CD4-positive, alpha-beta memory T cell (primary cell): ENCODE measurements at regions of chr18 and their contacts with region 1.

Region 1: DNA sequence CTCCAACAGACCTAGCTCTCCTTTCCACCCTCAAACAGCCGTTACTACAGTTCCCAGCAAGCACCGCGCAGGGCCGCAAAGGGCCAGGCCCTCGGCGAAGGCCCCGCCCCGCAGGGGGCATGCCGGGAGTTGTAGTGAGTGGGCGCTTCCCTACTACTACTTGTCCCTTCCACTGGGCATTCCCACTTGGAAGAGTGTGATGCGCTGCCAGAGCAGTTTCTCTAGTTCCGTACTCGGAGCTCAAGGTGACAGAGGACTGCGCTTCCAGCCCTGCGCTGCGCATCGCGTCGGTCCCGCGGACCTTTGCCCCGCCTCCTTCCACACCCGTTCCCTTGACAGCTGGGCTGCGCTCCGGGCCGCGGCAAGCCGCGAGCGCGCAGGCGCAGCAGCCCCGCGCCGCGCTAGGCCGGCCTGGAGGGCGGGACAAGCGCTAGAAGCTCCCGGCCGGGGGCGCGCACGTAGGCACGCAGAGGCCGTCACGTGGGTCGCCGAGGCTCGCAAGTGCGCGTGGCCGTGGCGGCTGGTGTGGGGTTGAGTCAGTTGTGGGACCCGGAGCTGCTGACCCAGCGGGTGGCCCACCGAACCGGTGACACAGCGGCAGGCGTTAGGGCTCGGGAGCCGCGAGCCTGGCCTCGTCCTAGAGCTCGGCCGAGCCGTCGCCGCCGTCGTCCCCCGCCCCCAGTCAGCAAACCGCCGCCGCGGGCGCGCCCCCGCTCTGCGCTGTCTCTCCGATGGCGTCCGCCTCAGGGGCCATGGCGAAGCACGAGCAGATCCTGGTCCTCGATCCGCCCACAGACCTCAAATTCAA is at the start of gene VAPA:
- DNase-seq: peak; percentile 94 to 98 (median 97)
- H3K4me3 ChIP-seq: peak within 1 kb of the TSS; percentile 79 to 80
- H3K4me3 Mint-ChIP-seq: peak within 1 kb of the TSS; percentile 92 to 95 (median 95)
- H3K27ac ChIP-seq: peak within 1 kb of the TSS; percentile 97
- H3K27ac Mint-ChIP-seq: peak within 1 kb of the TSS; percentile 92 to 99 (median 97)
- H3K4me1 ChIP-seq: peaks cover 42% of the 10 kb centered on the region
- H3K4me1 Mint-ChIP-seq: peaks cover 19 to 32% (median 25%) of the 10 kb centered on the region in 4 donors
- H3K27me3 ChIP-seq: no peaks in the 10 kb centered on the region
- H3K27me3 Mint-ChIP-seq: peaks cover 6 to 7% of the 10 kb centered on the region in 2 donors
- total RNA-seq, gene VAPA: 113 to 116 TPM

Region 2: GRCh38 chr18:8608795-8609658 is 1304.7 kb before region 1 on chr18 and contains the start of gene RAB12:
- CTCF ChIA-PET with region 1: no interaction called
- POLR2A ChIA-PET with region 1: no interaction called
- intact Hi-C with region 1: loop called (anchors 2 kb)
- DNase-seq: peak; percentile 84 to 87 (median 85)
- H3K4me3 ChIP-seq: peak within 1 kb of the TSS; percentile 83 to 89
- H3K4me3 Mint-ChIP-seq: peak within 1 kb of the TSS; percentile 90 to 96 (median 92)
- H3K27ac ChIP-seq: peak within 1 kb of the TSS; percentile 71
- H3K27ac Mint-ChIP-seq: peak within 1 kb of the TSS; percentile 84 to 96 (median 93)
- H3K4me1 ChIP-seq: peaks cover 45% of the 10 kb centered on the region
- H3K4me1 Mint-ChIP-seq: peaks cover 33 to 54% (median 44%) of the 10 kb centered on the region in 4 donors
- H3K27me3 ChIP-seq: peaks cover 1% of the 10 kb centered on the region
- H3K27me3 Mint-ChIP-seq: peaks cover 3 to 4% of the 10 kb centered on the region in 2 donors
- total RNA-seq, gene RAB12: 20.7 to 20.8 TPM

Region 3: GRCh38 chr18:9102508-9103375 is 811.0 kb before region 1 on chr18 and contains the start of gene NDUFV2:
- CTCF ChIA-PET with region 1: no interaction called
- POLR2A ChIA-PET with region 1: no interaction called
- intact Hi-C with region 1: loop called (anchors 2 kb)
- DNase-seq: peak; percentile 95 to 97 (median 97)
- H3K4me3 ChIP-seq: peak within 1 kb of the TSS; percentile 81 to 92
- H3K4me3 Mint-ChIP-seq: peak within 1 kb of the TSS; percentile 89 to 96 (median 94)
- H3K27ac ChIP-seq: peak within 1 kb of the TSS; percentile 82
- H3K27ac Mint-ChIP-seq: peak within 1 kb of the TSS; percentile 94 to 99 (median 97)
- H3K4me1 ChIP-seq: peaks cover 55% of the 10 kb centered on the region
- H3K4me1 Mint-ChIP-seq: peaks cover 37 to 65% (median 52%) of the 10 kb centered on the region in 4 donors
- H3K27me3 ChIP-seq: no peaks in the 10 kb centered on the region
- H3K27me3 Mint-ChIP-seq: no peaks in the 10 kb centered on the region
- total RNA-seq, gene NDUFV2: 135 TPM

Region 4: DNA sequence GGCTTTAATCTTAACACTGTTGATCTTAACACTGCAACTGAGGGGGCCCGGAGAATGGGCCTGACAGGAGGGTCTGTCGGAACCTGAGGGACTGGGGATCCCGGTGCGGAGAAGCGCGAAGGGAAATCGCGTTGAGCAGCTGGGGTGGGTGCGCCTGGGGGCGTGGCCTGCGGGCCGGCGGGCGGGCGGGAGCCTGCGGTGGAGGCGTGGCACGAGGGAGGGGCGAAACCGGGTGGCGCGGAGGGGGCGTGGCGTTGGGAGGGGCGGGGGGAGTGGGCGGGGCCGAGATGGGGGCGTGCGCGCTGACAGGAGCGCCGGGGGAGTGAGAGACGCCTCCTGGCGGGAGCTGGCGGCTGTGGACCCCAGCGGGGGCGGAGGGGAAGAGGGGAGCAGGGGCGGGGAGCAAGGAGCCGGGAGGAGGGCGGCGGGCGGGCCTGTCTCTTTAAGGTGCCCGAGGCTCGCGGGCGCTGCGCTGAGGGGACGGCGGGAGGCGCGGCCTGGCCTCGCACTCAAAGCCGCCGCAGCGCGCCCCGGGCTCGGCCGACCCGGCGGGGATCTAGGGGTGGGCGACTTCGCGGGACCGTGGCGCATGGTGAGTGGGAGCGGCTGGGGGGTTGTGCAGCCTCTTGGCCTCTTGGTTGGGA is 579.3 kb before region 1 on chr18 and contains the start of gene TWSG1:
- CTCF ChIA-PET with region 1: no interaction called
- POLR2A ChIA-PET with region 1: no interaction called
- intact Hi-C with region 1: loop called (anchors 2 kb)
- DNase-seq: peak; percentile 90 to 94 (median 91)
- H3K4me3 ChIP-seq: peak within 1 kb of the TSS; percentile 76 to 90
- H3K4me3 Mint-ChIP-seq: peak within 1 kb of the TSS; percentile 85 to 96 (median 90)
- H3K27ac ChIP-seq: peak within 1 kb of the TSS; percentile 57
- H3K27ac Mint-ChIP-seq: peak within 1 kb of the TSS; percentile 83 to 93 (median 91)
- H3K4me1 ChIP-seq: peaks cover 17% of the 10 kb centered on the region
- H3K4me1 Mint-ChIP-seq: peaks cover 8 to 27% (median 18%) of the 10 kb centered on the region in 4 donors
- H3K27me3 ChIP-seq: no peaks in the 10 kb centered on the region
- H3K27me3 Mint-ChIP-seq: peaks cover 1 to 6% of the 10 kb centered on the region in 2 donors
- total RNA-seq, gene TWSG1: 5.1 to 6.0 TPM

Region 5: DNA sequence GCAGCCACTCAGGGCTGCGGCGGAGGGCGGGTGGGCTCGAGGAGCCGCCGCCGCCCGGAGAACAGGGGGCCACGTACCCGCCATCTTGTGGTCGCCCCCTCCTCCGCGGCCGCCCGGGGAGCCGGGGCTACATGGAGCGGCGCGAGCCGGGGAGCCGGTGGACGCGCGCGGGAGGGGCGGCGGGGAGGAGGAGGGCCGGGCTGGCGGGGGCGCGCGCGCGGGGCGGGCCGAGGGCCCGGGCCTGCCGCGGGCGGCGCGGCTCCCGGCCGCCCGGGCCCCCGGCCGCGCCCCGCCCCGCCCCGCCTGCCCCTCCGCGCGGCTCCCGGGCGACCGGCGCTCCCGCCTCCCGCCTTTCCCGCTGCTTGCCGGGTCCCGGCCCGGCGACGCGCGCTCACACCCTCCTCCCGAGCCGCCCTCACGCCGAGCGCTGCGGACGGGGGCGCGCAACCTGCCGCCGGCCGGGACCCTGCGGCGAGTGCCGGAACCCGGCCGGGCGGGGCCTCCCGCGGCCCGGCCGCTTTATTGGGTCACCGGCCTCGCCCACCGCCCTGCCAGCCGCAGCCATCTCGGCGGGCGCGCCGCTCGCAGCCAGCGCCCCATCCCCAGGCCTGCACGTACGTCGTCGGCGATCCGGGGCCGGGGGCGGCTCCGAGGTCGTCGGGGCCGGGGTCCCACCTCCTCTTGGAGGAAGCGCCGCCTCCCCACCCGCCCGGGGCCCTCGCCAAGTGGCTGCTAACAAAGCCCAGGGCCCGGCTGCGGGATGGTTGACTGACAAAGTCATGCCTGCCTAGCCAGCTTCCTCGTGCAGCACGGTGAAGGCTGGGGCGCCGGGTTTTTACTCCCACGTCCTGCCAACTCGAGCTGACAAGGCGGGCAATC is 299.1 kb before region 1 on chr18 and contains the start of gene PPP4R1:
- CTCF ChIA-PET with region 1: interaction called, 4 read pairs
- POLR2A ChIA-PET with region 1: interaction called, 11 read pairs
- intact Hi-C with region 1: loop called (anchors 1 kb)
- DNase-seq: peak; percentile 58 to 78 (median 64)
- H3K4me3 ChIP-seq: peak within 1 kb of the TSS; percentile 66 to 90
- H3K4me3 Mint-ChIP-seq: peak within 1 kb of the TSS; percentile 93 to 99 (median 96)
- H3K27ac ChIP-seq: peak within 1 kb of the TSS; percentile 64
- H3K27ac Mint-ChIP-seq: peak within 1 kb of the TSS; percentile 93 to 96 (median 95)
- H3K4me1 ChIP-seq: peaks cover 40% of the 10 kb centered on the region
- H3K4me1 Mint-ChIP-seq: peaks cover 29 to 54% (median 37%) of the 10 kb centered on the region in 4 donors
- H3K27me3 ChIP-seq: no peaks in the 10 kb centered on the region
- H3K27me3 Mint-ChIP-seq: no peaks in the 10 kb centered on the region
- total RNA-seq, gene PPP4R1: 64.0 to 71.0 TPM

Region 6: DNA sequence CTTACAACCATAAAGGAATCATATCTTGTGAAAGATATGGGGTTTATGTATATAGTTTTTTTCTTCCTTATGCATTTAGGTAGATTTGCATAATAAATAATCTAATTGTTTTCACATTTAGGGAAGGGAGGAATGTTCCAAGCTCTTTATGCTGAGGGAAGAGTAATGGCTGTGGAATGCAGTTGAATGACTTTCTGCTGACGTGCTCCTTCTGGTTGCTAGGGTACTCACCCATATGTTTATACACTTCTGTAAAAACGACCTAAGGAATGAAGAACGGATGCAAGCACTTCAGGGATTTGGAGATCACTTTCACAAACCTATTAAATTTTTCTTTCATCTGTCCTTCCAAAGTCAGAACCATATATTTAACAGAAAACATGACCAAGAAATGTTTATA is 270.2 kb before region 1 on chr18:
- CTCF ChIA-PET with region 1: no interaction called
- POLR2A ChIA-PET with region 1: no interaction called
- intact Hi-C with region 1: no loop called
- DNase-seq: no peak
- H3K4me3 ChIP-seq: no peak overlapping the region
- H3K4me3 Mint-ChIP-seq: no peak overlapping the region
- H3K27ac ChIP-seq: no peak overlapping the region
- H3K27ac Mint-ChIP-seq: no peak overlapping the region
- H3K4me1 ChIP-seq: no peaks in the 10 kb centered on the region
- H3K4me1 Mint-ChIP-seq: no peaks in the 10 kb centered on the region
- H3K27me3 ChIP-seq: no peaks in the 10 kb centered on the region
- H3K27me3 Mint-ChIP-seq: peaks cover 3 to 4% of the 10 kb centered on the region in 2 donors

Region 7: DNA sequence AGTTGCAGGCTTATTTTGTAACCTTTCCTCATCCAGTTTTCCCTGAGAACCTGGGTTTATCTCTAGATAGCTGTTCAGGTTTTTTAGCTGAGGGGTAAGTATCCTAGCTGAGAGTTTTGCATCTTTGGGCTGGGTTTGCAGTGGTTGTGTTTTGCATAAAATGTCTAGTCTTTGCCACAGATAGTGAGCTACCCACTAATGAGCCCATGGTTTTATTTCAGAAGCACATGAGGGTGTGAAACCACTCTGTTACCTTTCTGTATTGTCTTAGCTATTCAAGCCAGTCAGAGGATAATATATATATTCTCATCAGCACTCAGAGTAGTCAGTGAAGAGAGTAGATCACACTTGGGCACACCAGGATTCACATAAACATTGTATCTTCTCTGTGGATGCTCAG is 52.6 kb before region 1 on chr18:
- CTCF ChIA-PET with region 1: no interaction called
- POLR2A ChIA-PET with region 1: no interaction called
- intact Hi-C with region 1: no loop called
- DNase-seq: no peak
- H3K4me3 ChIP-seq: no peak overlapping the region
- H3K4me3 Mint-ChIP-seq: no peak overlapping the region
- H3K27ac ChIP-seq: no peak overlapping the region
- H3K27ac Mint-ChIP-seq: no peak overlapping the region
- H3K4me1 ChIP-seq: no peaks in the 10 kb centered on the region
- H3K4me1 Mint-ChIP-seq: peaks cover 0 to 1% (median 0%) of the 10 kb centered on the region in 4 donors
- H3K27me3 ChIP-seq: no peaks in the 10 kb centered on the region
- H3K27me3 Mint-ChIP-seq: peaks cover 2 to 15% of the 10 kb centered on the region in 2 donors

Region 8: GRCh38 chr18:10015941-10016819 is 102.5 kb after region 1 on chr18:
- CTCF ChIA-PET with region 1: no interaction called
- POLR2A ChIA-PET with region 1: no interaction called
- intact Hi-C with region 1: no loop called
- DNase-seq: no peak
- H3K4me3 ChIP-seq: no peak overlapping the region
- H3K4me3 Mint-ChIP-seq: no peak overlapping the region
- H3K27ac ChIP-seq: no peak overlapping the region
- H3K27ac Mint-ChIP-seq: no peak overlapping the region
- H3K4me1 ChIP-seq: no peaks in the 10 kb centered on the region
- H3K4me1 Mint-ChIP-seq: peaks cover 0 to 1% (median 0%) of the 10 kb centered on the region in 4 donors
- H3K27me3 ChIP-seq: no peaks in the 10 kb centered on the region
- H3K27me3 Mint-ChIP-seq: peaks cover 3% of the 10 kb centered on the region in 2 donors

Region 9: DNA sequence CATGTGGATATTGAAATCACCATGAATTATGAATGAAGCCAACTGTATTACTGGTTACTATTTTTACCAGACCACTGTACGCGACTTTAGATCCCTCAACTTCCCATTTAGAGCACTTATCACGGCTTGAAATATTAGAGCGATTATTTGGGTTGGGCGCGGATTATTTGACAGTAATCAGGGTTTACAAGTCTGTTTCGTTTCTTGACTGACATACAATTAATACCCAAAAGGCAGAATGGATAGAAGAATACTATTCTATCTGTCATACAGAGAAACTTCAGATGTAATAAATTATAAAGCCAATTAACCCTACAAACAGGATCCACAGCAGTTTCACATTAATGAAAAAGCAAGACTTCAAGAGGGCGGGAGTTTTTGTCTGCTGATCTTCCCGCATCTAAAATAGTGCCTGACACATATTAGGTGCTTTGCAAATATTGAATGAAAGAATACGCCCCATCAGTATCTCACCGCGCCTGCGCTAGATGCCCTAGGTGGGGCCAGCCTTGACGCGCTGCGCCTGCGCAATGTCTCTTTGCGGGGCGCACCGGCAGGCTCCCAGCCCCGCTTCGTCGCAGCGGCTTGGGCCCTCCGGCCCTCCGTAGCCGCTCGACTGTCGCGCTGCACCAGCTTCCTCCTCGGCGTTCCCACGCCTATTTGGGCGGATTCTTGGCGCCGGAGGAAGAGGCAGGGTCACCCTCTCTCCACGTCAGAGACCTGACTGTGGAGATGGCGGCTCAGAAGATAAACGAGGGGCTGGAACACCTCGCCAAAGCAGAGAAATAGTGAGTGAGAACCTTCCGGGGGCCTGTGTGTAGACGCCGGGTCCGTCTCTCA is 611.9 kb after region 1 on chr18 and contains the start of gene NAPG:
- CTCF ChIA-PET with region 1: no interaction called
- POLR2A ChIA-PET with region 1: interaction called, 19 read pairs
- intact Hi-C with region 1: loop called (anchors 1 kb)
- DNase-seq: peak; percentile 88 to 94 (median 93)
- H3K4me3 ChIP-seq: peak within 1 kb of the TSS; percentile 89 to 91
- H3K4me3 Mint-ChIP-seq: peak within 1 kb of the TSS; percentile 95 to 99 (median 98)
- H3K27ac ChIP-seq: peak within 1 kb of the TSS; percentile 80
- H3K27ac Mint-ChIP-seq: peak within 1 kb of the TSS; percentile 92 to 99 (median 98)
- H3K4me1 ChIP-seq: peaks cover 51% of the 10 kb centered on the region
- H3K4me1 Mint-ChIP-seq: peaks cover 41 to 61% (median 51%) of the 10 kb centered on the region in 4 donors
- H3K27me3 ChIP-seq: no peaks in the 10 kb centered on the region
- H3K27me3 Mint-ChIP-seq: no peaks in the 10 kb centered on the region
- total RNA-seq, gene NAPG: 28.1 to 29.2 TPM

Region 10: DNA sequence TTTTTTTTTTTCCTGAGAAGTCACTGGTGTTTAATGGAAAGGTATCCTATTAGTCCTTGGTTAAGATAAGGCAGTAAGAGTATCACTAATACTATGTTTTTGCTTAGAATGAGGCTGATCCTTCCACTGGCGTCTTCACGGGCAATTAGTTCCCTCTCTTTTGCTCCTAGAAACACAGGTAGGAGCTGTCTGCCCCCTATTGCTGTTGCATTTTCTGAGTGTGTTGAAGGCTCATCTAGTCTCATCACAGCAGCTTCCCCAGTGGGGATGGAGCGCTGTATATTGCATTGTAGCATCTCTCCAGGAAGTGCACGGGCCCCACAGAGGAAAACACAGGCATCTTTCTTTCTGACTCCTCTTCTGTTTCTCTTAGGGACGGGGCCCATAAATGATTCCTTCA is 757.1 kb after region 1 on chr18:
- CTCF ChIA-PET with region 1: no interaction called
- POLR2A ChIA-PET with region 1: no interaction called
- intact Hi-C with region 1: no loop called
- DNase-seq: no peak
- H3K4me3 ChIP-seq: no peak overlapping the region
- H3K4me3 Mint-ChIP-seq: no peak overlapping the region
- H3K27ac ChIP-seq: no peak overlapping the region
- H3K27ac Mint-ChIP-seq: no peak overlapping the region
- H3K4me1 ChIP-seq: no peaks in the 10 kb centered on the region
- H3K4me1 Mint-ChIP-seq: no peaks in the 10 kb centered on the region
- H3K27me3 ChIP-seq: no peaks in the 10 kb centered on the region
- H3K27me3 Mint-ChIP-seq: peaks cover 0 to 3% of the 10 kb centered on the region in 2 donors

Region 11: DNA sequence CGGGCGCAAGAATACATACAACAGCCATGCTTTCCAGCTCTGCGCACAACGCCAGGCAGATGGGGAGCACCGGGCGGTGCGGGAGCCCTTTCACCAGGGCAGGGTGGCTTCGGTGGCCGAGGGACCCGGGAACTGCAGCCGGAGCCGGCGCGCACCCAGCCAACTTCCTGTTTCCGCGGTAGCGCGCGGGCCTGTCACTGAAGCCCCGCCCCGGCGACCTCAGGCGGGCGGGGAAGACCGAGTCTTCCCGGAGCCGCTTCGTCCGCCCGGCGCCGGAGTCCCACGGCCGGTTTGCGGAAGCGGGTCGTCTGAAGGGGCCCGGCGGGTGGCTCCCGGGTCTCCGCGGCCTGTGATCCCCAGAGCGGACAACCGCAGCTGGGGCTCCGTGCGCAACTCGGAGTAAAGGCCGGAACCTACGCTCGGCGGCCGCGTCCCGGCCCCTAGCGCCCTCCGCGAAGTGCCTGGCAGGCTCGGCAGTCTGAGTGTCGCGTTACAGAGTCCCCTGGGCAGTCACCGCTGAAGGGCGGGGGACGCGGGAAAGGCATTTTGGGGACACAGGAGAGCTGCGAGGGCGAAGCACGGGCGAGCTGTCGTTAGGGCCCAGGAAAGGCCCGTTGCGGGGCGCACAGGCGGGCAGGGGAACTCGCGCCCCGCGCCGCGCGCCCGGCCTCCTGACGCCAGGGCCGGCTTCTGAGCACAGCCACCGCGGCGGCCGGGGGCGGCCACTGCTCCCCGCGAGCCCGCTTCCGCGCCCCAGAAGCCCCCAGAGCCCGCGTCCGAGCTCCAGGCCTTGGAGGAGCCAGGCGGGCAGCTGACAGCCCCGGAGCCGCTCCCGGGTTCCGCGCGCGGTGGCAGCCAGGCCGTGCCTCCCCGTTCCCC is 1994.7 kb after region 1 on chr18 and contains the start of gene MPPE1:
- CTCF ChIA-PET with region 1: no interaction called
- POLR2A ChIA-PET with region 1: interaction called, 3 read pairs
- intact Hi-C with region 1: loop called (anchors 2 kb)
- DNase-seq: peak; percentile 82 to 87 (median 83)
- H3K4me3 ChIP-seq: peak within 1 kb of the TSS; percentile 86 to 93
- H3K4me3 Mint-ChIP-seq: peak within 1 kb of the TSS; percentile 94 to 96 (median 96)
- H3K27ac ChIP-seq: peak within 1 kb of the TSS; percentile 93
- H3K27ac Mint-ChIP-seq: peak within 1 kb of the TSS; percentile 89 to 98 (median 96)
- H3K4me1 ChIP-seq: peaks cover 20% of the 10 kb centered on the region
- H3K4me1 Mint-ChIP-seq: peaks cover 11 to 37% (median 21%) of the 10 kb centered on the region in 4 donors
- H3K27me3 ChIP-seq: no peaks in the 10 kb centered on the region
- H3K27me3 Mint-ChIP-seq: no peaks in the 10 kb centered on the region
- total RNA-seq, gene MPPE1: 75.3 to 79.7 TPM